Activated CD4-positive, alpha-beta T cell treated with anti-CD3 and anti-CD28 coated beads for 36 hours (primary cell): ENCODE measurements at regions of chr11 and their contacts with region 1.

Region 1: GRCh38 chr11:23973244-23973643 is 523.6 kb upstream of the LUZP2 start:
- DNase-seq: no peak
- ATAC-seq: no peak
- H3K4me3 Mint-ChIP-seq: no peak overlapping the region
- H3K27ac Mint-ChIP-seq: no peak overlapping the region
- H3K4me1 Mint-ChIP-seq: no peaks in the 10 kb centered on the region
- H3K27me3 Mint-ChIP-seq: no peaks in the 10 kb centered on the region

Region 2: DNA sequence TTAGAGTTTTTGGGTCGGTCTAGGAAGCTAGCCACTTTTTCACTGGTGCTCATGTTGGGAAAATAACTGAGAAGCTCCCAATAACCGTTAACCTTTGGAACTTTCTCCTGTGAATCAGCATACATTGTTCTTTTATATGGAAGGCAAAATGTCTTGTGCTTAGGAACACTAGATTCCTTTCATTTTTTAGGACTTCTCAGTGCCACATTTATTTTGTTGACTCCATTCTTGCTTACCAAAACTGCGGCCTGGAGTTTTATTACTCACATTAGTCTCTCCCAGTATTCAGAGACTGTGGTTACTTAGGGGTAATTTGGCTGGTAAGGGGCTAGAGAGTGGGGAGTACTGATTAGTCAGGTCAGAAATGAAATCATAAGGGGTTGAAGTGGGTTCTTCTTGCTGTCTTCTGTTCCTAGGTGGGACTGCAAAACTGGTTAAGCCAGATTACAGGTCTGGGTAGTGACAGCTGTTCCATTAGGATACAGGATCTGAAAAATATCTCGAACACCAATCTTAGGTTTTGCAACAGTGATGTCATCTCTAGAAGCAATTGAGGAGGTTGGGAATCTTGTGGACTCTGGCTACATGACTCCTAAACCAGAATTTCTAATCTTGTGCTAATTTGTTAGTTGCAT is 107.8 kb before region 1 on chr11:
- CTCF ChIA-PET with region 1: no interaction called
- POLR2A ChIA-PET with region 1: interaction called, 15 read pairs
- intact Hi-C with region 1: no loop called
- DNase-seq: no peak
- ATAC-seq: no peak
- H3K4me3 Mint-ChIP-seq: no peak overlapping the region
- H3K27ac Mint-ChIP-seq: no peak overlapping the region
- H3K4me1 Mint-ChIP-seq: no peaks in the 10 kb centered on the region
- H3K27me3 Mint-ChIP-seq: no peaks in the 10 kb centered on the region